CD4-positive, alpha-beta memory T cell (primary cell): ENCODE measurements at regions of chr15 and their contacts with region 1.

Region 1: DNA sequence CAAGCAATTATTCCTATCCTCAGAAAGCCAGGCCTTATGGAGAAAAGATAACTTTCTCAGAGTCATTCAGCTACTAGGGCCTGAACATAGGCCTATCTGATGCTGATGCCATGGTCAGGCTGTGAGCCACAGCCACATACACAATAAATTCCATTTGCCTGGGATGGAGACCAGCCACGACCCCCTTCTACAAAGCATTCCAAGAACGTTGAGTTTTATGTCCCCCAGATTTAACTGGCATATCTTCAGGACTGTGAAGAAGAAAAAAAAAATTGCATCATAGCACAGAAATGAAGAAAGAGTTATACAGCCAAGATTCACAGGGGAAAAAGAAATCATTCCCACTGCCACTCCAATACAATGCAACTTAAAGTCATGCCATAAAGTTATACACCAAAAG is 100.0 kb downstream of the THBS1 start:
- DNase-seq: no peak
- H3K4me3 ChIP-seq: no peak overlapping the region
- H3K4me3 Mint-ChIP-seq: no peak overlapping the region
- H3K27ac ChIP-seq: no peak overlapping the region
- H3K27ac Mint-ChIP-seq: no peak overlapping the region
- H3K4me1 ChIP-seq: no peaks in the 10 kb centered on the region
- H3K4me1 Mint-ChIP-seq: peaks cover 0 to 6% (median under 1%) of the 10 kb centered on the region in 4 donors
- H3K27me3 ChIP-seq: no peaks in the 10 kb centered on the region
- H3K27me3 Mint-ChIP-seq: no peaks in the 10 kb centered on the region

Region 2: GRCh38 chr15:39465843-39466749 is 214.8 kb before region 1 on chr15:
- CTCF ChIA-PET with region 1: no interaction called
- POLR2A ChIA-PET with region 1: no interaction called
- intact Hi-C with region 1: no loop called
- DNase-seq: no peak
- H3K4me3 ChIP-seq: no peak overlapping the region
- H3K4me3 Mint-ChIP-seq: no peak overlapping the region
- H3K27ac ChIP-seq: no peak overlapping the region
- H3K27ac Mint-ChIP-seq: no peak overlapping the region
- H3K4me1 ChIP-seq: no peaks in the 10 kb centered on the region
- H3K4me1 Mint-ChIP-seq: no peaks in the 10 kb centered on the region
- H3K27me3 ChIP-seq: no peaks in the 10 kb centered on the region
- H3K27me3 Mint-ChIP-seq: peaks cover 5 to 9% of the 10 kb centered on the region in 2 donors

Region 3: DNA sequence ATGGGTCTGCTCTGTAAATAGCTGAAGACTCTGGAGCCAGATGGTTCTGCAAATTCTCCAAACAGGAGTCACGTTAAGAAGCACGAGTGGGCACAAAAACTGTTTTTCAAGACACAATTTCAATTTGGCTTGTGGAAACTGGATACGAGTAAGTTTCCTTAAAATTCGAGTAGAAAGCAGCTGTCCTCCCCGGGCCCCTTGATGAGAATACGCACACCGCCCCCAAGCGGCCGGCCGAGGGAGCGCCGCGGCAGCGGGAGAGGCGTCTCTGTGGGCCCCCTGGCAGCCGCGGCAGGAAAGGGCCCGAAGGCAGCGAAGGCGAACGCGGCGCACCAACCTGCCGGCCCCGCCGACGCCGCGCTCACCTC is 100.8 kb before region 1 on chr15:
- CTCF ChIA-PET with region 1: interaction called, 6 read pairs
- POLR2A ChIA-PET with region 1: no interaction called
- intact Hi-C with region 1: loop called (anchors 5 kb)
- DNase-seq: peak; percentile 76 to 84 (median 84)
- H3K4me3 ChIP-seq: peak overlapping the region in 1 of 2 donors; percentile 56
- H3K4me3 Mint-ChIP-seq: peak overlapping the region; percentile 63 to 90 (median 75)
- H3K27ac ChIP-seq: no peak overlapping the region
- H3K27ac Mint-ChIP-seq: peak overlapping the region in 2 of 7 donors; percentile 35 to 69
- H3K4me1 ChIP-seq: peaks cover 14% of the 10 kb centered on the region
- H3K4me1 Mint-ChIP-seq: peaks cover 9 to 53% (median 19%) of the 10 kb centered on the region in 4 donors
- H3K27me3 ChIP-seq: peaks cover 2% of the 10 kb centered on the region
- H3K27me3 Mint-ChIP-seq: peaks cover 15 to 32% of the 10 kb centered on the region in 2 donors